H1 (cell line): ENCODE measurements at regions of chr2 and their contacts with region 1.

Region 1: DNA sequence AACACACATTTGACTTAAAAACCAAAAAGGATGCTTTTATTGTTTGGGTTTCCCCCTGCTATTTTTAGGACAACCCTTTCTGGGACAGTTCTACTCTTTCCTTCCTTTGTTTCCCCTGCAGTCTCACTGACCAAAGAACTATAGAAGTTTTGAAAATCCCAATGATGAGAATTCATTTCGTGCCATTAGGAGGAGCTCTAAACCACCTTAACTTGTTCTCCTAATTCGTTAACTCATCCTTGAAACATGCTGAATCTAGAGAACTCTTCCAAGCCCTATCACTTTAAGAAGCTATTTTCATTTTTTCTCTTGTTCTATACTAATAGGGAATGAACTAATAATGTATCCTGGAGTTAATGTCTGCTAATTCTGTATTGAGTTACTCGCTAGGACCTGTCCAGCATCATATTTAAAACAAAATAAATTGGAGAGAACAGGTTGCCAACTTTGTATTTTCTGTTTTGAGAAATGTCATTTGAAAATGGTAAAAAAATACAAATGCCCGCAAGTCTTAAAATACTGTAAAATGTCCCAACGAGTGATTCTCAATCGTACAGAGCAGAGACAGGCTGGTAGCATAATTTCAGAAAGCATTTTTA is 62.9 kb downstream of the AFTPH start:
- DNase-seq: no peak
- H3K4me3 ChIP-seq: no peak overlapping the region
- H3K27ac ChIP-seq: no peak overlapping the region
- H3K4me1 ChIP-seq: peaks cover 0 to 3% (median 0%) of the 10 kb centered on the region in 4 experiments; a peak in 1 of 7 replicates
- H3K27me3 ChIP-seq: no peaks in the 10 kb centered on the region
- CTCF ChIP-seq: peak in 2 of 3 experiments; percentile 51 to 65; a peak in 2 of 4 replicates
- EP300 ChIP-seq: no peak
- POLR2A ChIP-seq: no peak
- RAD21 ChIP-seq: peak; percentile 74 to 80

Region 2: DNA sequence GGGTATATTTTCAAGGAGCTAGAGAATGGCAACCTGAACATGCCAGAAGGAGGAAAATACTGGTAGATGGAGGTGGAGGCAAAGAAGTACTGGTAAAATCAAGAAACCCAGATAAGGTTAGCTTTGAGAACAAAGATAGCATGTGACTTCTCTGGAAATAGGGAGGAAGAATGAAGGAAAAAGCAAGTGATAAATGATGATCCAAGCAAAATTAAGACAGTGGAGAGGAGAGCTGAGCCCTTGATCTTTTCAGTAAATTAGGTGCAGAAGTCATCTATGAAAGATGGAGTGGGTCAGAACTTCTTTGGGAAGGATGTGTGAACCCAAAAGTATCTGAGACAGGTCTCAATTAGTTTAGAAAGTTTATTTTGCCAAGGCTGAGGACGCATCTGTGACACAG is 88.5 kb before region 1 on chr2:
- CTCF ChIA-PET with region 1: no interaction called
- POLR2A ChIA-PET with region 1: no interaction called
- DNase-seq: no peak
- H3K4me3 ChIP-seq: no peak overlapping the region
- H3K27ac ChIP-seq: no peak overlapping the region
- H3K4me1 ChIP-seq: peaks cover 0 to 10% (median 0%) of the 10 kb centered on the region in 4 experiments; a peak in 2 of 7 replicates
- H3K27me3 ChIP-seq: no peaks in the 10 kb centered on the region
- CTCF ChIP-seq: no peak
- EP300 ChIP-seq: no peak
- POLR2A ChIP-seq: no peak
- RAD21 ChIP-seq: no peak

Region 3: GRCh38 chr2:64565949-64566710 is 20.9 kb before region 1 on chr2:
- CTCF ChIA-PET with region 1: interaction called, 16 read pairs
- POLR2A ChIA-PET with region 1: interaction called, 3 read pairs
- DNase-seq: no peak
- H3K4me3 ChIP-seq: no peak overlapping the region
- H3K27ac ChIP-seq: no peak overlapping the region
- H3K4me1 ChIP-seq: no peaks in the 10 kb centered on the region
- H3K27me3 ChIP-seq: no peaks in the 10 kb centered on the region
- CTCF ChIP-seq: no peak
- EP300 ChIP-seq: no peak
- POLR2A ChIP-seq: no peak
- RAD21 ChIP-seq: no peak

Region 4: DNA sequence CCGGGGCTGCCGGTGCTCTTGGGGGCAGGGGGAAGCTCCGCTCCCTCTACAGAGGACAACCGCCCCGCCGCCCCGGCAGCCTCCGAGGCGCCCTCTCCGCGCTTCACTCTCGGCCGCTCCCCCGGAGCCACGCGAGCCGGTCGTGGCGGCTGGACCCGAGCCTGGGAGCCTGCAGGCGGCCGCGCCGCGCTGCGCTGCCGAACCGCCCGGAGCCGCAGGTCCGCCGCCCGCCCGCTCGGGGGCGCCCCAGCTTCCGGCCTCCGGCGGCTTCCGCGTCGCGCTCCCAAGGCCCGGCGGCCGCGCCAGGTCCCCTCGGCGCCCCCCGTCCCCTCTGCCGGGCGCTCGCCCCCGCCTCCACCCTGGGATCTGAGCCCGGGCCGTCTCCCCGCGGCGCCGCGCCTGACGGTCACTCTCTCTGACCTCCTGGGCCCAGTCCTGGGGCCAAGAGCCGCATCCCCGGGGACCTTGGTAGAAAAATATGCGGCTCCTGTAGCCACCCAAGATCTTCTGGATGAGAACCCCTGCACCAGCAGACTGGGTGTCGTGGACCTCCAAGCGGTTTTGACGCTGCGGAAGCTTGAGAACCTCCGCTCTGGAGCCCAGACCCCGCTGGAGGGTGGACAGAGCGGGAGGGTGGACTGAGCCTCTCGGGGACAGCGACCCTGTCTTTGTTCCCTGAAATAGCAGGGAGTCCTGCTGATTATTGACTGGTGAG is 22.4 kb after region 1 on chr2:
- CTCF ChIA-PET with region 1: interaction called, 20 read pairs
- POLR2A ChIA-PET with region 1: no interaction called
- DNase-seq: peak in 1 of 2 experiments; percentile 81
- H3K4me3 ChIP-seq: peak overlapping the region; percentile 54 to 79 (median 64)
- H3K27ac ChIP-seq: no peak overlapping the region
- H3K4me1 ChIP-seq: peaks cover 2 to 14% (median 6%) of the 10 kb centered on the region in 4 experiments
- H3K27me3 ChIP-seq: peaks cover 0 to 11% (median 9%) of the 10 kb centered on the region in 4 experiments; a peak in 6 of 7 replicates
- CTCF ChIP-seq: peak; percentile 58 to 76 (median 68)
- EP300 ChIP-seq: no peak
- POLR2A ChIP-seq: peak in 1 of 2 experiments; percentile 38; a peak in 1 of 3 replicates
- RAD21 ChIP-seq: peak in 1 of 2 experiments; percentile 49; a peak in 2 of 4 replicates